ENCODE measurements at regions of chr7 and their contacts with region 1.

Region 1: GRCh38 chr7:28389504-28390395 is 22.6 kb upstream of the CREB5 start:
- ATAC-seq: peak; percentile 53 to 74 (median 64)
- H3K4me3 ChIP-seq: peak overlapping the region in 3 of 5 donors; percentile 8 to 29 (median 14)
- H3K27ac ChIP-seq: no peak overlapping the region
- H3K4me1 ChIP-seq: peaks cover 6 to 18% of the 10 kb centered on the region in 2 donors

Region 2: GRCh38 chr7:27921081-27921836 is 468.5 kb before region 1 on chr7:
- in situ Hi-C with region 1: no loop called
- ATAC-seq: peak; percentile 81 to 98 (median 88)
- H3K4me3 ChIP-seq: no peak overlapping the region
- H3K27ac ChIP-seq: no peak overlapping the region
- H3K4me1 ChIP-seq: peaks cover 0 to 3% of the 10 kb centered on the region in 2 donors

Region 3: DNA sequence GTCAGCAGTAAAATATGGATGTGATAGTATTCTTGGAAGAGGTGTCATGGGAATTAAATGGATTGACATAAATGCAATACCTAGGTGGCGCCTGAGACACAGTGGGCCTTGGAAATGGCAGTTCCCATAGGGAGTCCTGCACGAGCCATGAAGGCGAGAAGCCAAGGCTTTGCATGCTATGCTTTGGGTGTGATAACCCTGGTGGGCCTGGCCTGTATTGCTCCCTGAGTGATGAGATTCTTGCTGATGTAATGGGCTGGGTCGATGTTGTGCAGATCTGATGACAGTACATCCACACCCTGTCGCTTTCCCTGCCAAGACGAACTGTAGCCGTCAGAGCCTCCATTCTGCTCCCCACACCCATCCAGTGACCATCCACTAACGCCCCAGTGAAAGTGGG is 69.0 kb after region 1 on chr7:
- in situ Hi-C with region 1: no loop called
- ATAC-seq: peak; percentile 35 to 100 (median 80)
- H3K4me3 ChIP-seq: no peak overlapping the region
- H3K27ac ChIP-seq: no peak overlapping the region
- H3K4me1 ChIP-seq: peaks cover 7 to 26% of the 10 kb centered on the region in 2 donors

Region 4: DNA sequence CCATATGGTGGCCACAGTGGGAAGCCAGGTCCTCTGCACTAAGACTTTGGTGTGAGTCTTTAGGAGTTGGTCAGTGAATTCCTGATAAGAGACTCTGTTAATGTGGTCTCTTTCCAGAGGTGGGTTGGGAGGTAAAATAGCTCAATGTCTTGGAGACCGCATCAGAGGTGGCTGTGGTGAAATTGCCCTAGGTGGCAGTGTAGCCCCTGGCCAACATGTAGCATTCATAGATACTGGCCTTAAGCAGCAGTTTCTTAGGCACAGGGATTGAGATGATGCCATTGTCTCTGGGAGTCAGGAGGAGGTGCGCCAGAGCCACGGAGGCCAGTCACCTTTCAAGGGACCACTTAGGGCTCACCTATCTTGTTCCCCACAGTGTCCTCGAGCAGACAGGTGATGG is 225.3 kb after region 1 on chr7:
- in situ Hi-C with region 1: loop called in 1 of 9 experiments (anchors 25 kb)
- ATAC-seq: peak in 1 of 8 experiments; percentile 73
- H3K4me3 ChIP-seq: no peak overlapping the region
- H3K27ac ChIP-seq: no peak overlapping the region
- H3K4me1 ChIP-seq: peaks cover 0 to 3% of the 10 kb centered on the region in 2 donors

Region 5: GRCh38 chr7:28626624-28627262 is 237.0 kb after region 1 on chr7:
- in situ Hi-C with region 1: loop called in 2 of 9 experiments (anchors 25 kb)
- ATAC-seq: peak in 3 of 8 experiments; percentile 45 to 83 (median 63)
- H3K4me3 ChIP-seq: no peak overlapping the region
- H3K27ac ChIP-seq: no peak overlapping the region
- H3K4me1 ChIP-seq: peaks cover 0 to 5% of the 10 kb centered on the region in 2 donors

Region 6: GRCh38 chr7:28661826-28662595 is 272.3 kb after region 1 on chr7:
- in situ Hi-C with region 1: no loop called
- ATAC-seq: no peak
- H3K4me3 ChIP-seq: no peak overlapping the region
- H3K27ac ChIP-seq: no peak overlapping the region
- H3K4me1 ChIP-seq: peaks cover 0 to 10% of the 10 kb centered on the region in 2 donors

Region 7: DNA sequence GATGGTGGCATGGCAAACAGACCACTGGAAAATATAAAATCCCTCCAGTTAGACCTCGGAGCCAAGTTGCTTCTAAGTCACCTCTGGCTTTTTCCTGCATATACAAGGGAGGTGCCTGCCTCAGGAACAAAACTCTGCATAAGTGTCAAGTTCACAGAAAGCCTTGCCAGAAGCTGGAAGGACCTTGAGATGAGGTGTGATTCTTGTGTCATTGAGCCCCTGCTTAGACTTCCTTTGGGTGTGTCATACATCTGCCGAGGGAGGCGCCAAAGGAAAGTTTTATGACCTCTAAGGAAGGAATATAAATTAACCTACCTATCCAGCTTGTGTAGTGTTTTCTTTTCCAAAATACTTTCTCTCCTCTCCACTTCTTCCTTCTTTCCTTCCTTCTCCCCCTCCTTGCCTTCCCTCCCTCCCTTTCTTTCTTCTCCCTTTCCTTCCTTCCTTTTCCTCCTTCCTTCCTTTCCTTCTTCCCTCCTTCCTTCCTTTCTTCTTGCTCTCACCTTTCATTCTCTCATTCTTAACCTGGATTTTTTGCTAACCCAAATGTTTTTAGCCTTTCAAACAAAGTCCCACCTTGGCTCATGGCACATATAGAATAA is 493.2 kb after region 1 on chr7:
- in situ Hi-C with region 1: no loop called
- ATAC-seq: peak in 2 of 8 experiments; percentile 56 to 61
- H3K4me3 ChIP-seq: no peak overlapping the region
- H3K27ac ChIP-seq: no peak overlapping the region
- H3K4me1 ChIP-seq: no peaks in the 10 kb centered on the region

Measured in motor neuron (in vitro differentiated cells).